Pancreas (tissue), 10 donors: ENCODE measurements at regions of chr19 and their contacts with region 1.

Region 1: GRCh38 chr19:36128392-36128736 is 11.5 kb upstream of the CAPNS1 start:
- DNase-seq: no peak
- ATAC-seq: peak; percentile 5 to 24 (median 16)
- H3K4me3 ChIP-seq: peak overlapping the region in 3 of 4 donors; percentile 40 to 55 (median 43)
- H3K27ac ChIP-seq: peak overlapping the region; percentile 65 to 91 (median 88)
- H3K4me1 ChIP-seq: peaks cover 0 to 5% (median 0%) of the 10 kb centered on the region in 3 donors
- H3K27me3 ChIP-seq: no peaks in the 10 kb centered on the region
- CTCF ChIP-seq: no peak

Region 2: GRCh38 chr19:36169084-36169760 is 40.9 kb after region 1 on chr19:
- intact Hi-C with region 1: loop called in 2 of 3 experiments (anchors 5 kb)
- DNase-seq: peak in 1 of 6 donors; percentile 17
- ATAC-seq: peak in 3 of 4 donors; percentile 44 to 54 (median 50)
- H3K4me3 ChIP-seq: no peak overlapping the region
- H3K27ac ChIP-seq: peak overlapping the region in 3 of 4 donors; percentile 14 to 66 (median 65)
- H3K4me1 ChIP-seq: peaks cover 0 to 5% (median 0%) of the 10 kb centered on the region in 3 donors
- H3K27me3 ChIP-seq: no peaks in the 10 kb centered on the region
- CTCF ChIP-seq: no peak

Region 3: DNA sequence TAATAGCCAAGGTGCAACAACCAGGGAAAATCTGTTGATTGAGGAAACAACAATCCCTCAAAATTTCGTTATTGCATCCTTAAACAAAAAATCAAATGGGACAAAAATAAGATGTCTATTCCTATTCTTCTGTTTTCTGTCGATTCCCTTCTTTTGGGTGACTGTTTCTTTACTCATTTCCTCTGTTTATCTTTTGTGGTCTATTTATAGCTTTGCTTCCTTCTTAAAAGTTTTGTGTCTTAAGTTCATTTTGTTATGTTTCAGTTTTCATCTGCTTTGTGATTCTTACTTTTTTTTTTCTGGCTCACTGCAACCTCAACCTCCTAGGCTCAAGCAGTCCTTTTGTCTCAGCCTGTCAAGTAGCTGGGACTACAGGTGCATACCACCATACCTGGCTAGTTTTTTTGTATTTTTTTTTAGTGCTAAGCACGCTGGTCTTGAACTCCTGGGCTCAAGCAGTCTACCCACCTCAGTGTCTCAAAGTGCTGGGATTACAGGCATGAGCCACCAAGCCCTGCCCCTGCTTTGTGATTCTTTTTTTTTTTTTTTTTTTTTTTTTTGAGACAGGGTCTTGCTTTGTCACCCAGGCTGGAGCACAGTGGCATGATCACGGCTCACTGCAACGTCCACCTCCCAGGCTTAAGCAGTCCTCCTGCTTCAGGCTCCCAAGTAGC is 97.0 kb after region 1 on chr19:
- intact Hi-C with region 1: no loop called
- DNase-seq: no peak
- ATAC-seq: no peak
- H3K4me3 ChIP-seq: no peak overlapping the region
- H3K27ac ChIP-seq: no peak overlapping the region
- H3K4me1 ChIP-seq: peaks cover 0 to 6% (median 0%) of the 10 kb centered on the region in 3 donors
- H3K27me3 ChIP-seq: no peaks in the 10 kb centered on the region
- CTCF ChIP-seq: no peak

Region 4: DNA sequence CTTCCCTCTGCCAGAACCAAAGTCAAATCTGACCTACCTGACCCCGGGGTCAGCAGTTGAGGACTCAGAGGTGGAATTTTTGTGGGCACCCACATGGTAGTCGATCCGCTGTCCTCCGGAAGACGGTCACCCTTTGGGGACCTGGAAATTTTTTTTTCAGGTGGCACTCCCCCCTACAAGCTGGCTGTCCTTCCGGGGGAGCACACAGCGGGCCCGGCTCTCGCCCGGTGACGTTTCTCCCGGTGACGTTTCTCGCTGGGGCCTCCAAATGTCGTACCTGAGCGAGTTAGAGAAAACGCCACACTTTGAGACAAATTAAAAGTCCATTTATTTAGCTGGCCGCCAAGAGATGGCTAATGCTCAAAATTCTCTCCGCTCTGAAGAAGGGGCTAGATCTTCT is 201.9 kb after region 1 on chr19:
- intact Hi-C with region 1: no loop called
- DNase-seq: no peak
- ATAC-seq: no peak
- H3K4me3 ChIP-seq: peak overlapping the region in 1 of 4 donors; percentile 3
- H3K27ac ChIP-seq: no peak overlapping the region
- H3K4me1 ChIP-seq: no peaks in the 10 kb centered on the region
- H3K27me3 ChIP-seq: no peaks in the 10 kb centered on the region
- CTCF ChIP-seq: no peak